Activated naive CD4-positive, alpha-beta T cell treated with anti-CD3 and anti-CD28 coated beads for 36 hours (primary cell): ENCODE measurements at regions of chr20 and their contacts with region 1.

Region 1: GRCh38 chr20:49219089-49219923 is at the start of gene DDX27:
- DNase-seq: peak; percentile 98
- H3K4me3 Mint-ChIP-seq: peak within 1 kb of the TSS; percentile 94
- H3K27ac Mint-ChIP-seq: peak within 1 kb of the TSS; percentile 95
- H3K4me1 Mint-ChIP-seq: peaks cover 25% of the 10 kb centered on the region
- H3K27me3 Mint-ChIP-seq: no peaks in the 10 kb centered on the region
- total RNA-seq, gene DDX27: 40.6 to 41.2 TPM

Region 2: GRCh38 chr20:48986899-48987298 is 232.4 kb before region 1 on chr20:
- CTCF ChIA-PET with region 1: no interaction called
- intact Hi-C with region 1: loop called (anchors 1 kb)
- DNase-seq: no peak
- H3K4me3 Mint-ChIP-seq: no peak overlapping the region
- H3K27ac Mint-ChIP-seq: no peak overlapping the region
- H3K4me1 Mint-ChIP-seq: no peaks in the 10 kb centered on the region
- H3K27me3 Mint-ChIP-seq: no peaks in the 10 kb centered on the region

Region 3: GRCh38 chr20:49046087-49046900 is 173.0 kb before region 1 on chr20 and contains the start of gene CSE1L:
- CTCF ChIA-PET with region 1: interaction called, 4 read pairs
- intact Hi-C with region 1: loop called (anchors 1 kb)
- DNase-seq: peak; percentile 96
- H3K4me3 Mint-ChIP-seq: peak within 1 kb of the TSS; percentile 98
- H3K27ac Mint-ChIP-seq: peak within 1 kb of the TSS; percentile 99
- H3K4me1 Mint-ChIP-seq: peaks cover 38% of the 10 kb centered on the region
- H3K27me3 Mint-ChIP-seq: no peaks in the 10 kb centered on the region
- total RNA-seq, gene CSE1L: 86.1 to 88.9 TPM

Region 4: DNA sequence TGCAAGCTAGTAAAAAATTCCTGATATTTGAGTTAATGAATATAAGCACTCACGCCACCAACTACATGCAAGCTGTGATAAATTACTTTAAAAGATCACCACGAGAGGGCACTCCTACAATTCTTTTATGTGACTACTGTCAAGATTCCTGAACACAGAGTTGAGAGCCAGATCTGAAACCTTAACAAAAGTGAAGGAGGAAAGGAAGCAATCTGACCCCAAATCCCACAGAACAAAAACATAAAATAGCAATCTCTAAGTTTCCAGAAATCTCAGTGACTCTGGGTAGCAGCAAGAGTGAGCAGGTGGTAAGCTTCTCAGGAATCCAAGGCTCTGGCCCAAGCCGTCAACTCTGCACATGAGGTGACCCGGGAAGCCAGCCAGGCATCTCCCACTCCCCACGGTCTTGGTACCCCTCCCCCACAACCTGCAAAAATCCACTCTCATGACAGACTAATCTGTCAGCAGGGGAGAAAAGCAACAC is 86.3 kb before region 1 on chr20:
- CTCF ChIA-PET with region 1: interaction called, 114 read pairs
- intact Hi-C with region 1: loop called (anchors 1 kb)
- DNase-seq: peak; percentile 11
- H3K4me3 Mint-ChIP-seq: no peak overlapping the region
- H3K27ac Mint-ChIP-seq: no peak overlapping the region
- H3K4me1 Mint-ChIP-seq: peaks cover 3% of the 10 kb centered on the region
- H3K27me3 Mint-ChIP-seq: no peaks in the 10 kb centered on the region

Region 5: DNA sequence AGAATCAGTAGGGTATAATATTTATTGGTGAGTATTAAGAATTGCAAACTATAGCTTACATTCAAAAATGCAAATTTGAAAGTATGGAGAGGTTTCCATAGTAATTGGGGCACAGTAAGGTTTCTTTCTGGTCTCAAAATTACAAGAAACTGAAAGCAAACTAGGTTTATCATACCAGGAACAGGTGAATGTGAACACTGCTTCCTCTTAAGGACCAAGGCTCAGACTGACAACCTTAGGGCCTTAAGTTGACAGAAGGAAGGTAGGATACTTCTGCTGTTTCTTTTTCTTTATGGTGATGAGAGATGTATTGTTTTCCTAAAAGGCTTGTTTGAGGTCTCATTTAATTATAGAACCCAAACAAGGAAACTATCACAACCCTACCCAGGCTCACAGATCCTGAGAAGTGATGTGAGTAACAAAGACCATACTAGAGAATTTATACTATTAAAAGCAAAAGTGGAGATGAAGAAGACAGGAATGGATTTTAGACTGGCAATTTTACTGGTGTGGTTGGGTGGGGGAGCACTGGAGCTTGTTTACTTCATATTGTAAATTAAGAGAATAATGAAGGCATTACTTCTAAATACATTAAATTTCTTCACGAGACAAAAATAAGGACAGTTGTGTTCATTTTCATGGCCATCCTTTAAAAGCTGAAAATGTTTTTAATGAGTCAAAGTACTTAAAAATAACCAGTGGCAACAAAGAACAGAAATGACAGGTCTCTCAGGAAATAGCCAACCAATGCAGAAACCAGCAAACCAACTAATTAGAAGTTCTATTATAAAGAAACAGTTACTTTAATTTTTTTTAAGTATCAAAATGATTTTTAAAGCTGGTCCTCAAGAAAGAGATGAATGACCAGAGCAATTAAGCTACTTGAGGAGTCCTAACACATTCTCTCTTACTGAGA is 52.5 kb before region 1 on chr20:
- CTCF ChIA-PET with region 1: interaction called, 20 read pairs
- intact Hi-C with region 1: loop called (anchors 2 kb)
- DNase-seq: no peak
- H3K4me3 Mint-ChIP-seq: peak overlapping the region; percentile 48
- H3K27ac Mint-ChIP-seq: peak overlapping the region; percentile 84
- H3K4me1 Mint-ChIP-seq: peaks cover 71% of the 10 kb centered on the region
- H3K27me3 Mint-ChIP-seq: no peaks in the 10 kb centered on the region

Region 6: GRCh38 chr20:49207076-49207475 is 12.2 kb before region 1 on chr20:
- CTCF ChIA-PET with region 1: interaction called, 19 read pairs
- intact Hi-C with region 1: no loop called
- DNase-seq: peak; percentile 52
- H3K4me3 Mint-ChIP-seq: no peak overlapping the region
- H3K27ac Mint-ChIP-seq: no peak overlapping the region
- H3K4me1 Mint-ChIP-seq: no peaks in the 10 kb centered on the region
- H3K27me3 Mint-ChIP-seq: no peaks in the 10 kb centered on the region